A673 (cell line): ENCODE measurements at regions of chr1 and their contacts with region 1.

Region 1: GRCh38 chr1:18926315-18927081 is 24.1 kb upstream of the ALDH4A1 start:
- DNase-seq: peak; percentile 92
- H3K4me3 ChIP-seq: no peak overlapping the region
- H3K27ac ChIP-seq: peak overlapping the region; percentile 80
- H3K4me1 ChIP-seq: peaks cover 54% of the 10 kb centered on the region
- H3K27me3 ChIP-seq: no peaks in the 10 kb centered on the region
- CTCF ChIP-seq: no peak; the same call in 1 of the 2 replicates

Region 2: DNA sequence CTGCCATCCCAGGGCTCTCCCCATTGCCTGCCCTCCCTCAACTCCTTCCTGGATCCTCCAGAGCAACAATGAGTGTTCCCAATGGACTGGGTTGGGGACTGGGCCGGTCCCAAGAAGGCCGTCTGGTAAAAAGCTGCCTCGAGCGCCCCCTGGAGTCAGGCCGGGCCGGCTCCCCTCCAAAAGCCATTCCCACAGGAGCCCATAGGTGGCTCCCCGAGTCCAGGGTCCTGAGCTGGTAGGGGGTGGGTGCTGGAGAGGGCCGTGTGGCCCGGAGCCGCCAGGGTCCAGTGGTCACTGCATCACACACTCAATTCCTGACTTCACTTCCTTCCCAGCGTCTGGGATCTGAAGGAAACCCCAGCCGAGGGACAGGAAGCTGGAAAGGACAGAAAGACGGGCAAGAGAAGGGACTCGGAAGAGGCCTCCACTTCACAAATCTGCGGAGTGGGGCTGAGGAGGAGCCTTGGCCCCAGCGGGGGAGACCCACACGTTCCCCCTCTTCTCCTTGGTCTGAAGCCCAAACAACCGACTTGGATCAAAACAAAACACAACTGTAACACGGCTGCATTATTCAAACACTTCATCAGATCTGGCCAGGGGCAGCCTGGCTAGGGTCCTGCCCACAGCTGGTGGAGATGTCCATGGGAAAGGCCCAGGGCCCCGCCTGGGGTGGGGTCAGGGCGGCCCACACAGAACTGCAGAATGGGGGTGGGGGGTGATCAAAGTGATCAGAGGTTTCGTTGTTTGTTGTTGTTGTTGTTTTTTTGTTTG is 13.2 kb before region 1 on chr1:
- CTCF ChIA-PET with region 1: interaction called, 10 read pairs
- POLR2A ChIA-PET with region 1: no interaction called
- intact Hi-C with region 1: no loop called
- DNase-seq: peak; percentile 83
- H3K4me3 ChIP-seq: no peak overlapping the region
- H3K27ac ChIP-seq: peak overlapping the region; percentile 2
- H3K4me1 ChIP-seq: peaks cover 8% of the 10 kb centered on the region
- H3K27me3 ChIP-seq: no peaks in the 10 kb centered on the region
- CTCF ChIP-seq: peak; percentile 100

Region 3: DNA sequence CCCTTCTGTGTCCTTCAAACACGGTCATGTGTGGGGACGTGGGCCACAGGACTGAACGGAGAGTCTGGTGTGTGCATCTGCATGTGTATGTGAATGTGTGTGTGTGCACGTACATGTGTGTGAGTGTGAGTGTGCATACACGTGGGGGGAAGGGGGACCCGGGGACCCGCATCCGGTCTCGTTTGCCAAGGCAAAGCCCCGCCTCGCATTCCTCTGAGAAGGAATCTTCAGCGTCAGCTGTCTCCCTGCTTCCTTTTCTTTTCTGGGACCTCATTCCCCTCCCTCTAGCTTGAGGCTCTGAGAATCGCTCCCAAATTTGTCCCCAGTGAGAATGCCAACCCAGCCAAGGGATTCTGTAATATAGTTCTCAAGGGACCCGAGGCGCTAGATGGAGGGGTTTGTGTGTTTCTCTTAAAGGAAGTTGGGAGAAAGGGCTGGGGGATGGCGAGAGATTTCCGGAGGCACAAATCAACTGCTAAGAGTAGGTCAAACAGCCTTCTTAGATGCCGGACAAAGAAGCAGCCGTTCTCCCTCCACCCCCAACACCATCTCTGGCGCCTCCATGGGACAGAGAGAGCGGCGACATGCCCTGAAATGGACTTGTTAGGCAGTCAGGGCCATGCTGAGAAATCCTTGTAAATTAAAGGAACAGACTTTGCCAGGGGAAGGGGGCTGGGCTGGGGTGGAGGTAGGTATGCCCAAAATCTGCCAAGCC is 23.3 kb after region 1 on chr1:
- CTCF ChIA-PET with region 1: no interaction called
- POLR2A ChIA-PET with region 1: no interaction called
- intact Hi-C with region 1: loop called (anchors 1 kb)
- DNase-seq: peak; percentile 65
- H3K4me3 ChIP-seq: peak overlapping the region; percentile 33
- H3K27ac ChIP-seq: peak overlapping the region; percentile 79
- H3K4me1 ChIP-seq: peaks cover 74% of the 10 kb centered on the region
- H3K27me3 ChIP-seq: no peaks in the 10 kb centered on the region
- CTCF ChIP-seq: 0 out of 2 replicates have a peak, but pooled peaks have one; percentile 18

Region 4: GRCh38 chr1:19220991-19221390 is 294.5 kb after region 1 on chr1:
- CTCF ChIA-PET with region 1: no interaction called
- POLR2A ChIA-PET with region 1: no interaction called
- intact Hi-C with region 1: no loop called
- DNase-seq: peak; percentile 35
- H3K4me3 ChIP-seq: no peak overlapping the region
- H3K27ac ChIP-seq: peak overlapping the region; percentile 37
- H3K4me1 ChIP-seq: peaks cover 5% of the 10 kb centered on the region
- H3K27me3 ChIP-seq: no peaks in the 10 kb centered on the region
- CTCF ChIP-seq: no peak